GM12878 (cell line): ENCODE measurements at regions of chr12 and their contacts with region 1.

Region 1: DNA sequence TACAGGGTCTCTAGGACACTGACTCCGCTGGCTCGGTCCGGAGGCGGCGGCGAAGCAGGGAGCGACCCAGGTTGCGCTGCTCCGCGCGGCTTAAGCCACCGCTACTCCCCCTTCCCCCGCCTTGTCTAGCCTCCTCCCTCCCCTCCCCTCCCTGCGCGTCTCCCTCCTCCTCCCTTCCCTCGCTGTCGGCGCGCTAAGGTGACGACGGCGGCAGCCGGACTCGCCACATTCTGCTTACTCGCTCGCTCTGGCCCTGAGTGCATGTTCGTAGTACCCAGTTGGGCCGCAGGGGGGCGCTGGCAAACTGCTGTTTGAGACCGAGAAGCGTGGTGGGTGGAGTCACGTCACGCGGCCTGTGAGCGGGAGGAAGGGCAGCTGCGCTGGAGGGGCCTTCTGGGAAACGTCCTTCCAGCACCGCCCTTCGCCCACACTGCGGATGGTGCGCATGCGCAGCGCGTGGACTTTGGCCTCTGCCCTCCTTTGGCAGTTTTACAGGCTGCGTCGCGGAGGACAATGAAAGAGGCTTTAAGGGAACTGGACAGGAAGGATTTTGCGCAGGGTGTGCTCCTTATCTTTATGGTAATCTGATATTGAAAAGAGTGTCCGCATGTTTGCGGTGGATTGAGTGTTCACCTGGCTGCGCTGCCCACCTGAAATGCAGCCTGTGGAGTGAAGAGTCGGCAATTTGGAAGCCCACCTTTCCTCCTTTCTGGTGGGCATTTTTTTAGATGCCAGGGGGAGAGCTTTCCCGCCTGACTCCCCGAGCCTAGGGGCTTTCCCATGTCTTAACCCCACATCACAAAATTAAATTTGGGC is at the start of gene SCAF11:
- DNase-seq: peak; percentile 99
- ATAC-seq: peak; percentile 85
- H3K4me3 ChIP-seq: peak within 1 kb of the TSS; percentile 92
- H3K27ac ChIP-seq: peak within 1 kb of the TSS; percentile 99
- H3K4me1 ChIP-seq: peaks cover 8% of the 10 kb centered on the region
- H3K27me3 ChIP-seq: no peaks in the 10 kb centered on the region
- CTCF ChIP-seq: peak; percentile 93 to 99 (median 98); a peak in 5 of 6 replicates
- EP300 ChIP-seq: peak; percentile 37 to 53; a peak in 2 of 4 replicates
- POLR2A ChIP-seq: peak; percentile 88
- RAD21 ChIP-seq: peak; percentile 88
- polyA plus RNA-seq, gene SCAF11: 42.0 to 44.9 TPM

Region 2: GRCh38 chr12:45543906-45544315 is 446.8 kb before region 1 on chr12:
- CTCF ChIA-PET with region 1: interaction called, 6 read pairs
- POLR2A ChIA-PET with region 1: no interaction called
- RAD21 ChIA-PET with region 1: interaction called, 6 read pairs
- SMC1A ChIA-PET with region 1: interaction called, 13 read pairs
- in situ Hi-C with region 1: no loop called
- intact Hi-C with region 1: loop called (anchors 5 kb)
- DNase-seq: peak; percentile 56
- ATAC-seq: peak; percentile 99
- H3K4me3 ChIP-seq: no peak overlapping the region
- H3K27ac ChIP-seq: no peak overlapping the region
- H3K4me1 ChIP-seq: no peaks in the 10 kb centered on the region
- H3K27me3 ChIP-seq: no peaks in the 10 kb centered on the region
- CTCF ChIP-seq: peak; percentile 73 to 84 (median 83)
- EP300 ChIP-seq: no peak
- POLR2A ChIP-seq: no peak
- RAD21 ChIP-seq: peak; percentile 96

Region 3: GRCh38 chr12:45655201-45655600 is 335.5 kb before region 1 on chr12:
- CTCF ChIA-PET with region 1: no interaction called
- POLR2A ChIA-PET with region 1: no interaction called
- RAD21 ChIA-PET with region 1: no interaction called
- SMC1A ChIA-PET with region 1: no interaction called
- in situ Hi-C with region 1: no loop called
- intact Hi-C with region 1: no loop called
- DNase-seq: no peak
- ATAC-seq: peak; percentile 73
- H3K4me3 ChIP-seq: no peak overlapping the region
- H3K27ac ChIP-seq: no peak overlapping the region
- H3K4me1 ChIP-seq: no peaks in the 10 kb centered on the region
- H3K27me3 ChIP-seq: peaks cover 0 to under 1% of the 10 kb centered on the region in 2 experiments; a peak in 1 of 4 replicates
- CTCF ChIP-seq: no peak
- EP300 ChIP-seq: no peak
- POLR2A ChIP-seq: no peak
- RAD21 ChIP-seq: peak; percentile 30; the same call in 1 of the 2 replicates

Region 4: DNA sequence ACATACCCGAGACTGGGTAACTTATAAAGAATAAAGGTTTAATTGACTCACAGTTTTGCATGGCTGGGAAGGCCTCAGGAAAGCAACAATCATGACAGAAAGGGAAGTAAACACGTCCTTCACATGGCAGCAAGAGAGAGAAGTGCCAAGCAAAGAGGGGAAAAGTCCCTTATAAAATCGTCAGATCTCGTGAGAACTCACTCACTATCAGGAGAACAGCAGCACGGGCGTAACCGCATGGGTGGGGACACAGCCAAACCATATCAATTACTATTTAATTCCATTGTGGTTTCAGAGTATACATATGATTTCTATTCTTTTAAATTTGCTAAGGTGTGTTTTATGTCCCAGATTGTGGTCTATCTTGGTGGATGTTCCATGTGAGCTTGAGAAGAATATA is 118.2 kb before region 1 on chr12:
- CTCF ChIA-PET with region 1: no interaction called
- POLR2A ChIA-PET with region 1: no interaction called
- RAD21 ChIA-PET with region 1: no interaction called
- SMC1A ChIA-PET with region 1: no interaction called
- in situ Hi-C with region 1: no loop called
- intact Hi-C with region 1: no loop called
- DNase-seq: no peak
- ATAC-seq: no peak
- H3K4me3 ChIP-seq: no peak overlapping the region
- H3K27ac ChIP-seq: no peak overlapping the region
- H3K4me1 ChIP-seq: no peaks in the 10 kb centered on the region
- H3K27me3 ChIP-seq: no peaks in the 10 kb centered on the region
- CTCF ChIP-seq: no peak
- EP300 ChIP-seq: no peak
- POLR2A ChIP-seq: no peak
- RAD21 ChIP-seq: no peak

Region 5: DNA sequence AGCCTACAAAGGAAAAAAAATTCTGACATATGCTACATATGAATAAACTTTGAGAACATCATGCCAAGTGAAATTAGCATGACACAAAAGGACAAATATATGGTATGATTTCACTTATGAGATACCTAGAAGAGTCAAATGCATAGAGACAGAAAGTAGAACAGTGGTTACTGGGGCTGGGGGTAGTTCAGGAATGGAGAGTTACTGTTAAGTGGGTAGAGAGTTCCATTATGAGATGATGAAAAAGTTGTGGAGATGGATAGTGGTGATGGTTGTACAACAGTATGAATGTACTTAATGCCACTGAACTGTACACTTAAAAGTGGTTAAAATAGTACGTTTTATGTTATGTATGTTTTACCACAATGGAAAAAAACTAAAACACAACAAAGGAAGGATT is 92.6 kb before region 1 on chr12:
- CTCF ChIA-PET with region 1: no interaction called
- POLR2A ChIA-PET with region 1: no interaction called
- RAD21 ChIA-PET with region 1: no interaction called
- SMC1A ChIA-PET with region 1: no interaction called
- in situ Hi-C with region 1: no loop called
- intact Hi-C with region 1: no loop called
- DNase-seq: no peak
- ATAC-seq: no peak
- H3K4me3 ChIP-seq: no peak overlapping the region
- H3K27ac ChIP-seq: no peak overlapping the region
- H3K4me1 ChIP-seq: no peaks in the 10 kb centered on the region
- H3K27me3 ChIP-seq: no peaks in the 10 kb centered on the region
- CTCF ChIP-seq: no peak
- EP300 ChIP-seq: no peak
- POLR2A ChIP-seq: no peak
- RAD21 ChIP-seq: no peak

Region 6: GRCh38 chr12:45928309-45928708 is 62.4 kb before region 1 on chr12:
- CTCF ChIA-PET with region 1: interaction called, 6 read pairs
- POLR2A ChIA-PET with region 1: interaction called, 11 read pairs
- RAD21 ChIA-PET with region 1: no interaction called
- SMC1A ChIA-PET with region 1: no interaction called
- in situ Hi-C with region 1: no loop called
- intact Hi-C with region 1: no loop called
- DNase-seq: no peak
- ATAC-seq: no peak
- H3K4me3 ChIP-seq: no peak overlapping the region
- H3K27ac ChIP-seq: no peak overlapping the region
- H3K4me1 ChIP-seq: no peaks in the 10 kb centered on the region
- H3K27me3 ChIP-seq: no peaks in the 10 kb centered on the region
- CTCF ChIP-seq: no peak
- EP300 ChIP-seq: no peak
- POLR2A ChIP-seq: no peak
- RAD21 ChIP-seq: no peak

Region 7: GRCh38 chr12:46071769-46072624 is 81.3 kb after region 1 on chr12:
- CTCF ChIA-PET with region 1: interaction called, 11 read pairs
- POLR2A ChIA-PET with region 1: no interaction called
- RAD21 ChIA-PET with region 1: interaction called, 10 read pairs
- SMC1A ChIA-PET with region 1: interaction called, 4 read pairs
- in situ Hi-C with region 1: no loop called
- intact Hi-C with region 1: loop called (anchors 2 kb)
- DNase-seq: peak; percentile 57
- ATAC-seq: peak; percentile 99
- H3K4me3 ChIP-seq: no peak overlapping the region
- H3K27ac ChIP-seq: peak overlapping the region; percentile 39; the same call in 1 of the 2 replicates
- H3K4me1 ChIP-seq: peaks cover 11% of the 10 kb centered on the region
- H3K27me3 ChIP-seq: no peaks in the 10 kb centered on the region
- CTCF ChIP-seq: peak; percentile 97 to 100 (median 99)
- EP300 ChIP-seq: no peak
- POLR2A ChIP-seq: no peak
- RAD21 ChIP-seq: peak; percentile 97

Region 8: DNA sequence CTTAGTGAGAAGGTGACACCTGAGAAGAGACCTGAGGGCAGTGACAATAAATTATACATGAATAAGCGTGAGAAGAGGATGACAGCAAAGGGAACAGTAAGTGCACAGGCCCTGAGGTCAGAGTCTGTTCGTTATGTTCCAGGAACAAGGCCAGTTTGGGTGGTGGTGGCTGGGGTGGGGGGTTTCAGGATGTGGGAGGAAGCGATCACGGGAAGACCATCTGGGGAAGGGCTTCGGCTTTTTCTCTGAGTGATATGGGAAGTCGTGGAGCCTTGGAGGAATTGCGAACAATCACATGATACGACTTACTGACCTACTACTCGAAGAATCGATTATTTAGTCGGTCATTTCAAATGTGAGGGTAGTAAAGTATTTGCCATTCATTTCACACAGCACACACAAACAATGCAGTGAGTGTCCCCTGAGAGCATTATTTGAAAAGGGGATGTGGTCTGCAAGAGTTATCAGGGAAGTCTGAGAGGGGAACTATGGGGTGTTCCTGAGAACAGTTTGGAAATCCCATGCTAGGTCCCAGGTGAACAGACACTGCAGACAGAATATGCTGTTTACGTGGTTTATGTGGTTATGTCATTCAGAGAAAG is 183.5 kb after region 1 on chr12:
- CTCF ChIA-PET with region 1: no interaction called
- POLR2A ChIA-PET with region 1: no interaction called
- RAD21 ChIA-PET with region 1: interaction called, 5 read pairs
- SMC1A ChIA-PET with region 1: no interaction called
- in situ Hi-C with region 1: no loop called
- intact Hi-C with region 1: loop called (anchors 1 kb)
- DNase-seq: peak; percentile 85
- ATAC-seq: peak; percentile 57
- H3K4me3 ChIP-seq: no peak overlapping the region; the same call in 1 of the 2 replicates
- H3K27ac ChIP-seq: peak overlapping the region; percentile 21
- H3K4me1 ChIP-seq: peaks cover 25% of the 10 kb centered on the region
- H3K27me3 ChIP-seq: no peaks in the 10 kb centered on the region
- CTCF ChIP-seq: no peak
- EP300 ChIP-seq: peak in 1 of 2 experiments; percentile 76; a peak in 2 of 4 replicates
- POLR2A ChIP-seq: no peak
- RAD21 ChIP-seq: no peak

Region 9: DNA sequence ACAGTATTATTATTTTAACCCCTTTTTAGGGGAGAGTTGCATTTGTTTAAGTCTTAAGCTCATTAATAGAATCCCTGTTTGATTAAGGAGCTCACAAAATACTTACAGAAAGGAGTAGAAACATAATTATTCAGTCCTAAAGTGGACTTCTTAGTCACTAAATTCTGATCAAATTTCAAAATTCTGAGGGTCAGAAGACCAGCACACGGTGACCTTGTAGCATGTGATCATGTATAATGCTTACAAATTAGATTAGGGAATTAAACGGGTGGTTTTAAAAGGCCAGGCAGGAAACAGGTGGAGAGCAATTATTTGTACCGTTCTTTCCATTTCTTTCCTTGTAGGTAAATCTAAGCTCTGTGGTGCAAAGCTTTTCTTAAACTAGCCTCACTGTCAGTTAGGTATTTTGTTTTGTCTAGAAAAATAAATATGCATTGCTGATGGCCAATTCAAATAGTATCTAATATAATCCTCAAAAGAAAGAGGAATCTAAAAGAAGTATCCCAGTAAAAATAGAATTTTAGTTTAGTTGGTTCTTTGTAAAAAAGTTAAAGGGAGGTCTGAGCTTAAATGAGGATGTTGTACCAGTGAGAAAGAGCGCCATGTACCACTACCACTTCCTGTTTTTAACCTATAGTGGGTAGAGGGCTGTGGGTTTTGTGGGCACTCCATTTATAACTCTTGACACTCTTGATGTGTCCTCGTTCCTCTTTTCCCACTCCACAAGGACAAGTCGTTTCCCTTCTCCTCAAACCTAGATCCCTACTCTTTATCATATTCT is 227.1 kb after region 1 on chr12:
- CTCF ChIA-PET with region 1: no interaction called
- POLR2A ChIA-PET with region 1: interaction called, 3 read pairs
- RAD21 ChIA-PET with region 1: interaction called, 3 read pairs
- SMC1A ChIA-PET with region 1: interaction called, 6 read pairs
- in situ Hi-C with region 1: loop called (anchors 10 kb)
- intact Hi-C with region 1: loop called (anchors 5 kb)
- DNase-seq: peak; percentile 90
- ATAC-seq: peak; percentile 71
- H3K4me3 ChIP-seq: peak overlapping the region; percentile 44; the same call in 1 of the 2 replicates
- H3K27ac ChIP-seq: peak overlapping the region; percentile 87
- H3K4me1 ChIP-seq: peaks cover 62% of the 10 kb centered on the region
- H3K27me3 ChIP-seq: no peaks in the 10 kb centered on the region
- CTCF ChIP-seq: no peak
- EP300 ChIP-seq: peak; percentile 95 to 97
- POLR2A ChIP-seq: no peak
- RAD21 ChIP-seq: no peak

Region 10: DNA sequence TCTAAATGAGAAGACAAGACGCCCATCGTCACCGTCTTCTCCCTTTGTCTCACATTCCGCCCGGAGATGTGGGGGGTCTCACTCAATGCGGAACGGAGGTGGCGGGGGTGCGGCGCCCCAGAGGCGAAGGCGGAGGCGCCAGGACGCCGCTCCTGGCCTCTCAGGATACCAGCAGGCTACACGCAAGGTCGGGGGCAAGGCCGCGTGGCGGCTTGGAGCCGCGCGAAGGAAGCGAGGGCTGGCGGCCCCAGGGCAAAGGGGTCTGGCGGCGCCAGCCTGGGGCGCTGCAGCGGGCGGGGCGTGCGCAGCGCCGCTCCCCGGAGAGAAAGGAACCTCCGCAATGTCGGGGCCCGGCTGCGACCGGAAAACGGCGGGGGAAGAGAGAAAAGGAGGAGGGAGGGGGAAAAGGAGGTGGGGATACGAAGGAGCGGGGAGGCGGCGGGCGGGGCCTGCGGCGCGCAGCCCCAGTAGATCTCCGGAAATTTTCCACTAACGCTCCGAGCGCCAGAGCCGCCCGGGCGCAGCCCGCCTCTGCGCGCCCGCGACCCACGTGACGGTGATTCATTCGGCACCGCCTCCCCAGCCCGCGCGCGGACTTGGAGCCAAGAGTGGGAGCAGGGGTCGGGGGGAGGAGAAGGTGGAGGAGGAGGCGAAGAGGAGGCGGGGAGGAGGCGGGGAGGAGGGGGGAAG is 392.4 kb after region 1 on chr12:
- CTCF ChIA-PET with region 1: no interaction called
- POLR2A ChIA-PET with region 1: no interaction called
- RAD21 ChIA-PET with region 1: interaction called, 4 read pairs
- SMC1A ChIA-PET with region 1: no interaction called
- in situ Hi-C with region 1: loop called (anchors 10 kb)
- intact Hi-C with region 1: loop called (anchors 5 kb)
- DNase-seq: peak; percentile 81
- ATAC-seq: peak; percentile 80
- H3K4me3 ChIP-seq: peak overlapping the region; percentile 80
- H3K27ac ChIP-seq: peak overlapping the region; percentile 89
- H3K4me1 ChIP-seq: peaks cover 23% of the 10 kb centered on the region
- H3K27me3 ChIP-seq: no peaks in the 10 kb centered on the region
- CTCF ChIP-seq: peak; percentile 19 to 39 (median 34); a peak in 4 of 6 replicates
- EP300 ChIP-seq: no peak; a peak in 2 of 4 replicates
- POLR2A ChIP-seq: peak; percentile 81
- RAD21 ChIP-seq: peak; percentile 39